Aorta (tissue), 5 donors: ENCODE measurements at regions of chr22 and their contacts with region 1.

Region 1: GRCh38 chr22:21599053-21599893 is 30.5 kb downstream of the YDJC start:
- DNase-seq: no peak
- ATAC-seq: no peak
- H3K4me3 ChIP-seq: no peak overlapping the region
- H3K27ac ChIP-seq: no peak overlapping the region
- H3K4me1 ChIP-seq: no peaks in the 10 kb centered on the region
- H3K27me3 ChIP-seq: no peaks in the 10 kb centered on the region

Region 2: GRCh38 chr22:21622011-21622918 is 23.0 kb after region 1 on chr22:
- intact Hi-C with region 1: loop called in 1 of 2 experiments (anchors 2 kb)
- DNase-seq: peak in 1 of 2 donors; percentile 69
- ATAC-seq: no peak
- H3K4me3 ChIP-seq: no peak overlapping the region
- H3K27ac ChIP-seq: no peak overlapping the region
- H3K4me1 ChIP-seq: no peaks in the 10 kb centered on the region
- H3K27me3 ChIP-seq: no peaks in the 10 kb centered on the region

Region 3: GRCh38 chr22:21807544-21808529 is 208.6 kb after region 1 on chr22:
- intact Hi-C with region 1: no loop called
- DNase-seq: no peak
- ATAC-seq: no peak
- H3K4me3 ChIP-seq: no peak overlapping the region
- H3K27ac ChIP-seq: no peak overlapping the region
- H3K4me1 ChIP-seq: peaks cover 0 to 1% of the 10 kb centered on the region in 2 donors
- H3K27me3 ChIP-seq: no peaks in the 10 kb centered on the region